ENCODE measurements at regions of chr19 and their contacts with region 1.

Region 1: DNA sequence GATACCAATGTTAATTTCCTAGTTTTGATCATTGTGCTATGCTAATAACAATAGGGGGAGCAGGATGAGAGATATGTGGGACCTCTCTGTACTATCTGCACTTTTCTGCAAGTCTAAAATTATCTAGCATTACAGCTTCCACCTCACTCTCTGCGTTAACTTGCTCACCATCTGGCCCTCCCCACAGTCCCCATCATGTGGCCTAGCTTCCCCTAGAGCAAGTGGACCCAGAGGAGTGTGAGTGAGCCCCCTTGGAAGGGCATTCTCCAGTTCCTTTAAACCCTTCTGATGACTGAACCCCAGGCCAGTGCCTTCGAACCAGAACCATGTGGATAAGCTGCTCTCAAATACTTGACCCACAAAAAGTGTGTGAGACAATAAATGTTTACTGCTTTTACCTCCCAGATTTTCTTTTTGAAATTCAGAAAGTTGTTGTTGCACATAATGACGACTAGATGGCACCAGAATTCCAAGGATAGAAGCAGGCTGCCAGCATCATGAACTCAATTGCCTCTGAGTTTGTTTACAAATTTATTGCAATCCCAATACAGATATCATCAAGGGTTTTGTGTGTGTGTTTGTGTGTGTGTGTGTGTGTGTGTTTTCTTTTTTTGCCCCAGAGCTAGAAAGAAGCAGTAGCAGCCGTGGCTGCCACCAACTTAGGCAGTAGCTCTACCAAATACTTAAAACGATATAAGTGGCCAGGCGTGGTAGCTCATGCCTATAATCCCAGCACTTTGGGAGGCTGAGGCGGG is 49.0 kb upstream of the ZNF780A start:
- H3K4me3 ChIP-seq: no peak overlapping the region
- H3K27ac ChIP-seq: no peak overlapping the region
- H3K4me1 ChIP-seq: no peaks in the 10 kb centered on the region
- CTCF ChIP-seq: peak; percentile 89

Region 2: GRCh38 chr19:40080289-40080688 is 59.4 kb before region 1 on chr19:
- CTCF ChIA-PET with region 1: no interaction called
- POLR2A ChIA-PET with region 1: no interaction called
- H3K4me3 ChIP-seq: no peak overlapping the region
- H3K27ac ChIP-seq: no peak overlapping the region
- H3K4me1 ChIP-seq: no peaks in the 10 kb centered on the region
- CTCF ChIP-seq: no peak

Region 3: GRCh38 chr19:40090241-40091204 is 49.2 kb before region 1 on chr19 and contains the start of gene ZNF780A:
- CTCF ChIA-PET with region 1: interaction called, 10 read pairs
- POLR2A ChIA-PET with region 1: no interaction called
- H3K4me3 ChIP-seq: peak within 1 kb of the TSS; percentile 51
- H3K27ac ChIP-seq: peak within 1 kb of the TSS; percentile 87
- H3K4me1 ChIP-seq: peaks cover 16% of the 10 kb centered on the region
- CTCF ChIP-seq: peak; percentile 38; the same call in 1 of the 2 replicates

Region 4: DNA sequence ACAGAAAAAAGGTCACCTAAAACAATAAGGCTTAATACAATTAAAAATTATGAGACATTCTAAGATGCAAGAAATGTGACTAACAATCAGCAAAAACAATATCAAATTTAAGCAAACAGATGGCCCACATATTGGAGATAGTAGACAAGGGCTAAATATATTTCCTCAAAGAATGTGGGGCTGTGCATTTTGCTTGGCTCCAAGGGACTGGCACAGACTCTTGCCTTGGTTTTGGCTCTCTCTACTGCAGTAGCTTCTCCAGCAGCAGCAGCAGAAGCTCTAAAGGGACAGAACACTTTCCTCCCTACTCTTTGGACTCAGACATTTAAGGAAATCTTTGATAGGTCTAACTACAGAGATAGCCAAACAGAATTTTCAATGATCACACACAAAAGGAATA is 10.7 kb before region 1 on chr19:
- CTCF ChIA-PET with region 1: interaction called, 55 read pairs
- POLR2A ChIA-PET with region 1: no interaction called
- H3K4me3 ChIP-seq: no peak overlapping the region
- H3K27ac ChIP-seq: no peak overlapping the region
- H3K4me1 ChIP-seq: no peaks in the 10 kb centered on the region
- CTCF ChIP-seq: no peak

Region 5: DNA sequence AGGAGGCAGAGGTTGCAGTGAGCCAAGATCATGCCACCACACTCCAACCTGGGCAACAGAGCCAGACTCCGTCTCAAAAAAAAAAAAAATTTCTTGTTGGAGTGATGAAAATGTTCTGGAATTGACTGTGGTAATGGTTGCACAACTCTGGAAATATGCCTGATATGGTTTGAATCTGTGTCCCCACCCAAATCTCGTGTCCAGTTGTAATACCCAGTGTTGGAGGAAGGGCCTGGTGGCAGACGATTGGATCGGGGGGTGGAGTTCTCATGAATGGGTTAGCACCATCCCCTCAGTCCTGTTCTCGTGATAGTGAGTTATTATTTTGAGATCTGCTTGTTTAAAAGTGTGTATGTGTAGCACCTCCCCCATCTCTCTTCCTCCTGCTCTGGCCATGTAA is 10.5 kb after region 1 on chr19:
- CTCF ChIA-PET with region 1: interaction called, 12 read pairs
- POLR2A ChIA-PET with region 1: no interaction called
- H3K4me3 ChIP-seq: no peak overlapping the region
- H3K27ac ChIP-seq: no peak overlapping the region
- H3K4me1 ChIP-seq: no peaks in the 10 kb centered on the region; the same call in 1 of the 2 replicates
- CTCF ChIP-seq: no peak

Region 6: GRCh38 chr19:40221858-40222837 is 82.4 kb after region 1 on chr19:
- CTCF ChIA-PET with region 1: interaction called, 52 read pairs
- POLR2A ChIA-PET with region 1: no interaction called
- H3K4me3 ChIP-seq: no peak overlapping the region
- H3K27ac ChIP-seq: no peak overlapping the region
- H3K4me1 ChIP-seq: peaks cover 17% of the 10 kb centered on the region
- CTCF ChIP-seq: peak; percentile 93

Region 7: GRCh38 chr19:40228396-40228795 is 88.7 kb after region 1 on chr19:
- CTCF ChIA-PET with region 1: interaction called, 11 read pairs
- POLR2A ChIA-PET with region 1: no interaction called
- H3K4me3 ChIP-seq: no peak overlapping the region
- H3K27ac ChIP-seq: no peak overlapping the region
- H3K4me1 ChIP-seq: peaks cover 11% of the 10 kb centered on the region
- CTCF ChIP-seq: no peak